ENCODE measurements at regions of chr2 and their contacts with region 1.

Region 1: DNA sequence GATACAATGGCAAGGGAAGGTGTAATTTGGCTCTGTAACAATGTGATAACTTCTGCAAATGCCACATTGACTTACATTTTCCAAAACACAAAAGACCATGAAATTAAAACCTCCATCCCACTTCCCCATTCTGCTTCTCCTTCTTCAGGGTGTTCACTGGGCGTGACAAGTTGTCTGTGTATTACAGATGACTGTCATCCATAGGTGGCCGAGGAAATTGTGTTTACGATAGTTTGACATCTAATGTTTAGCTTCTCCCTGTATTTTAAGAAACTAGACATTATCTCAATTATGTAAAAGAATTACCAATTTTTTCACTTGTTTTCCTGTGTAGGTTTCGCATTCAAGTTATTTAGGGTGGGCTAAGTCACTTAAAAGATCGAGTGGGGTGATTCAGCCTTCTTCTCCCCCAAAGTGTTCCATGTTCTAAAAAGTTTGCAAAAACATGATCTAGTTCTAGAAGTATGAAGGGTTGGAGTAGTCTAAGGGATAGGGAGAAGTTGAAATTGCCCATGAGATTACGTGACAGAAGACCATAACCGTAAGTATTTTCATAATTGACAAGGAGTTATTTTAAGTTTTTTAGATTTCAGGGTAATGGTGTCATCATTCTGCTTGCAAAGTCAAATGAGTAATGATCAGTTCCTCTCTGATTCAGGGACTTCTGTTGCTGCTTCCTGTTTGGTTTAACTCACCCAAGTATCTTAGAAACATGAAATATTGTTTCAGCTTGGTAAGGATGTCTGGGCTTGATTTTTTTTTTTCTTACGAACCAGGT is 25.2 kb upstream of the CYTIP start:
- DNase-seq: peak; percentile 95
- ATAC-seq: peak; percentile 78
- H3K4me3 ChIP-seq: peak overlapping the region; percentile 46; the same call in 1 of the 2 replicates
- H3K27ac ChIP-seq: peak overlapping the region; percentile 98
- H3K4me1 ChIP-seq: peaks cover 38% of the 10 kb centered on the region
- H3K27me3 ChIP-seq: no peaks in the 10 kb centered on the region
- CTCF ChIP-seq: no peak
- EP300 ChIP-seq: peak; percentile 100
- POLR2A ChIP-seq: no peak
- RAD21 ChIP-seq: peak; percentile 22; the same call in 1 of the 2 replicates

Region 2: GRCh38 chr2:157150747-157151146 is 318.4 kb before region 1 on chr2:
- CTCF ChIA-PET with region 1: no interaction called
- POLR2A ChIA-PET with region 1: no interaction called
- RAD21 ChIA-PET with region 1: no interaction called
- SMC1A ChIA-PET with region 1: no interaction called
- in situ Hi-C with region 1: no loop called
- intact Hi-C with region 1: loop called (anchors 10 kb)
- DNase-seq: peak; percentile 68
- ATAC-seq: peak; percentile 93
- H3K4me3 ChIP-seq: no peak overlapping the region
- H3K27ac ChIP-seq: peak overlapping the region; percentile 18; the same call in 1 of the 2 replicates
- H3K4me1 ChIP-seq: peaks cover 10% of the 10 kb centered on the region
- H3K27me3 ChIP-seq: no peaks in the 10 kb centered on the region
- CTCF ChIP-seq: no peak
- EP300 ChIP-seq: peak; percentile 77 to 83; a peak in 2 of 4 replicates
- POLR2A ChIP-seq: no peak
- RAD21 ChIP-seq: no peak

Region 3: DNA sequence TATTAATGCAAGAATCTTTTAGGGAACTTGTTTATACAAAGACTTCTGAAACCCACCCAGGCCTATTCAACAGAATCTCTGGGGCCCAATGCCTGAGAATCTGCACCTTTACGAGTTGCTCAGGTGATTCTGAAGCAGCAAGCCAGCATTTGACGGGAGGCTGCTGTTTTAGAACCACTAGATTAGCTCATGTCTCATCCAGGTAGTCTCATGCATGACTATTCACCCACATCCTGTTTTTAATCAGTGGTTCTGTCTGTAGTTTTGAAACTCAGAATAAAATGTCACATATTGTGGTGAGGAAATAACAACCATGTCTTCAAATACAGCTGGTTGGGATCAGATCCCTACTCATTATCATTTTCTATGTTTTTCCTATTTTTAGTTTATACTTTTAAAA is 64.8 kb before region 1 on chr2:
- CTCF ChIA-PET with region 1: no interaction called
- POLR2A ChIA-PET with region 1: interaction called, 4 read pairs
- RAD21 ChIA-PET with region 1: interaction called, 5 read pairs
- SMC1A ChIA-PET with region 1: interaction called, 7 read pairs
- in situ Hi-C with region 1: no loop called
- intact Hi-C with region 1: loop called (anchors 2 kb)
- DNase-seq: peak; percentile 85
- ATAC-seq: peak; percentile 99
- H3K4me3 ChIP-seq: no peak overlapping the region
- H3K27ac ChIP-seq: no peak overlapping the region; the same call in 1 of the 2 replicates
- H3K4me1 ChIP-seq: peaks cover 7% of the 10 kb centered on the region
- H3K27me3 ChIP-seq: no peaks in the 10 kb centered on the region
- CTCF ChIP-seq: no peak
- EP300 ChIP-seq: peak; percentile 87 to 92
- POLR2A ChIP-seq: no peak
- RAD21 ChIP-seq: 0 out of 2 replicates have a peak, but pooled peaks have one; percentile 17

Region 4: DNA sequence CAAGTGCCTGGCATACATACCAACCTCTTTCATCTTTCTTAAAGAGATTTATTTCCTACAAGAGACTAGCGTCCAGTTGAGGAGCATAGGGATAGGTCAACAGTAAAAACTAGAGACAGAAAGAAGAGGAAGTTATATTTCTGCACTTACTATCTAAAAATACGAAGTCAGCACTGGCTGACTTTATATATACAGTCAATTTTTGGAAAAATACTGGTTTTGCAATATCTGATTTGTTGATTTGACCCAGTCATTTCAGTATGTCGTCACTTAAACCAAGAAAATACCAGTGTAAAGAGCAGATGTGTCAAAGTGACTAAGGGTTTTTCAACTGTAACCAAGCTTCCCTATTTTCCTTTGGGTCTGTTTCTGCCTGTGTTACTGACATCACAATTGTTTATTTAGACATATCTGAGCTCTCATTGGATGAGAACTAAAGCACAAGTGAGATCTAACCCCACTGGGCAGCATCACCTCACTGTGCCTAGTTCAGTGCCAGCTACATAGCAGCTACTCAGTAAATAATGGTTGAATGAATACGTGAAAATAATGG is 48.3 kb before region 1 on chr2:
- CTCF ChIA-PET with region 1: interaction called, 3 read pairs
- POLR2A ChIA-PET with region 1: interaction called, 3 read pairs
- RAD21 ChIA-PET with region 1: interaction called, 44 read pairs
- SMC1A ChIA-PET with region 1: interaction called, 14 read pairs
- in situ Hi-C with region 1: no loop called
- intact Hi-C with region 1: no loop called
- DNase-seq: no peak
- ATAC-seq: peak; percentile 74
- H3K4me3 ChIP-seq: no peak overlapping the region
- H3K27ac ChIP-seq: peak overlapping the region; percentile 60
- H3K4me1 ChIP-seq: peaks cover 34% of the 10 kb centered on the region
- H3K27me3 ChIP-seq: no peaks in the 10 kb centered on the region
- CTCF ChIP-seq: no peak
- EP300 ChIP-seq: peak in 1 of 2 experiments; percentile 73; a peak in 2 of 4 replicates
- POLR2A ChIP-seq: no peak
- RAD21 ChIP-seq: no peak

Region 5: GRCh38 chr2:157486596-157487270 is 17.6 kb after region 1 on chr2:
- CTCF ChIA-PET with region 1: interaction called, 15 read pairs
- POLR2A ChIA-PET with region 1: interaction called, 52 read pairs
- RAD21 ChIA-PET with region 1: interaction called, 8 read pairs
- SMC1A ChIA-PET with region 1: interaction called, 87 read pairs
- in situ Hi-C with region 1: no loop called
- intact Hi-C with region 1: no loop called
- DNase-seq: no peak
- ATAC-seq: no peak
- H3K4me3 ChIP-seq: no peak overlapping the region
- H3K27ac ChIP-seq: no peak overlapping the region
- H3K4me1 ChIP-seq: no peaks in the 10 kb centered on the region
- H3K27me3 ChIP-seq: no peaks in the 10 kb centered on the region
- CTCF ChIP-seq: no peak
- EP300 ChIP-seq: no peak
- POLR2A ChIP-seq: no peak
- RAD21 ChIP-seq: no peak

Region 6: DNA sequence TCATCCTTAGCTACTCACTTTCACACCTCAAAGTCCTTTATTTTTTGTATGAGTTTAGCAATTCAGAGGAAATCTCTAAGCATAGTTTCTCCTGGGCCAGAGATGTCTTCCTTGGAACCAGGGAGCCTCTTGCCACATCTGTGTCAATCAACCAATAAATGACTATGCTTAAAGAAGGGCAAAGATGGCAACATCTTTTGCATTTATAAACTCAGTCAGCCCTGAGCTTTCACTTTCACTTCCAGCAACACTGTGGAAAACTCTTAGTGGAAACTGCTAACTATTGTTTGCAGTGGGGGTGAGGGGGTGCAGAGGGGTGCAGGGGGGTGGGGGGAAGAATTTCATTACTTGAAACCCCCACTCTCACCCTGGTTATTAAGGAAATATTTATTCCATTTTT is 156.2 kb after region 1 on chr2:
- CTCF ChIA-PET with region 1: no interaction called
- POLR2A ChIA-PET with region 1: no interaction called
- RAD21 ChIA-PET with region 1: no interaction called
- SMC1A ChIA-PET with region 1: no interaction called
- in situ Hi-C with region 1: no loop called
- intact Hi-C with region 1: no loop called
- DNase-seq: no peak
- ATAC-seq: peak; percentile 29; the same call in 1 of the 3 replicates
- H3K4me3 ChIP-seq: no peak overlapping the region
- H3K27ac ChIP-seq: no peak overlapping the region
- H3K4me1 ChIP-seq: no peaks in the 10 kb centered on the region
- H3K27me3 ChIP-seq: peaks cover 9 to 16% of the 10 kb centered on the region in 2 experiments
- CTCF ChIP-seq: no peak
- EP300 ChIP-seq: no peak
- POLR2A ChIP-seq: no peak
- RAD21 ChIP-seq: no peak

Measured in GM12878 (cell line).